ENCODE measurements at regions of chr12 and their contacts with region 1.

Region 1: GRCh38 chr12:59431266-59431665 is 164.6 kb upstream of the SLC16A7 start:
- DNase-seq: no peak
- H3K4me3 Mint-ChIP-seq: no peak overlapping the region
- H3K27ac Mint-ChIP-seq: no peak overlapping the region
- H3K4me1 Mint-ChIP-seq: no peaks in the 10 kb centered on the region
- H3K27me3 Mint-ChIP-seq: no peaks in the 10 kb centered on the region
- CTCF ChIP-seq: no peak

Region 2: GRCh38 chr12:59780605-59781135 is 349.4 kb after region 1 on chr12:
- CTCF ChIA-PET with region 1: no interaction called
- intact Hi-C with region 1: loop called (anchors 5 kb)
- DNase-seq: peak; percentile 26
- H3K4me3 Mint-ChIP-seq: no peak overlapping the region
- H3K27ac Mint-ChIP-seq: no peak overlapping the region
- H3K4me1 Mint-ChIP-seq: no peaks in the 10 kb centered on the region
- H3K27me3 Mint-ChIP-seq: no peaks in the 10 kb centered on the region
- CTCF ChIP-seq: peak; percentile 43

Region 3: DNA sequence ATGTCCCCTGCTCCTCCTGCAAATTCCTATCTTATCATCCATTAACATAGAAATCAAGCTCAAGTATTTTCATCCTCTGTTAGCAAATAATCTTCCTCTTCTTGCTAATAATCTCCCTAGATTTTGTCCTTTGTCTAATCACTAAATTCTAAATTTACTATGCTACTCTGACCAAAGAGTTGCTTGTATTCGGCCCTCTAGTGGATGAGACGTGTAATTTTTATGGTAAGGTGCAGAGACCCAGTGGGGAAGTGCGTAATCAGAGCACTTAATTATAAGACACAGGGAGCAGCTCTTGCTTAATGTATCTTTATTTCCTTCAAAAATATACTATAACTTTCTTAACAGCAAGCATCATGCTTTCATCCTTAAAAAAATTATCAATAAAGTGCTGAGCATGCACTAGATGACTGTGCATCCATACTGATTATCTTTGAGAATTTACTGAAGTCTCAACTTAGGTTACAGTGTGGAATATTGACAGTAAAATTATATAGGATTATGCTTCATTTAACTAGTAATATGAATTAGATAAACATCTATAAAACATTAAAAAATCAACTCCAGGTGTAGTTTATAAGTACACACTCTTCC is 377.1 kb after region 1 on chr12:
- CTCF ChIA-PET with region 1: no interaction called
- intact Hi-C with region 1: loop called (anchors 2 kb)
- DNase-seq: no peak
- H3K4me3 Mint-ChIP-seq: no peak overlapping the region
- H3K27ac Mint-ChIP-seq: no peak overlapping the region
- H3K4me1 Mint-ChIP-seq: peaks cover 8% of the 10 kb centered on the region
- H3K27me3 Mint-ChIP-seq: no peaks in the 10 kb centered on the region
- CTCF ChIP-seq: peak; percentile 73